Right cardiac atrium (tissue), 5 donors: ENCODE measurements at regions of chr2 and their contacts with region 1.

Region 1: GRCh38 chr2:209525834-209526281 is 102.0 kb downstream of the MAP2 start:
- DNase-seq: no peak
- ATAC-seq: peak; percentile 51
- H3K4me3 ChIP-seq: peak overlapping the region; percentile 1
- H3K27ac ChIP-seq: no peak overlapping the region
- H3K4me1 ChIP-seq: no peaks in the 10 kb centered on the region
- H3K27me3 ChIP-seq: no peaks in the 10 kb centered on the region

Region 2: DNA sequence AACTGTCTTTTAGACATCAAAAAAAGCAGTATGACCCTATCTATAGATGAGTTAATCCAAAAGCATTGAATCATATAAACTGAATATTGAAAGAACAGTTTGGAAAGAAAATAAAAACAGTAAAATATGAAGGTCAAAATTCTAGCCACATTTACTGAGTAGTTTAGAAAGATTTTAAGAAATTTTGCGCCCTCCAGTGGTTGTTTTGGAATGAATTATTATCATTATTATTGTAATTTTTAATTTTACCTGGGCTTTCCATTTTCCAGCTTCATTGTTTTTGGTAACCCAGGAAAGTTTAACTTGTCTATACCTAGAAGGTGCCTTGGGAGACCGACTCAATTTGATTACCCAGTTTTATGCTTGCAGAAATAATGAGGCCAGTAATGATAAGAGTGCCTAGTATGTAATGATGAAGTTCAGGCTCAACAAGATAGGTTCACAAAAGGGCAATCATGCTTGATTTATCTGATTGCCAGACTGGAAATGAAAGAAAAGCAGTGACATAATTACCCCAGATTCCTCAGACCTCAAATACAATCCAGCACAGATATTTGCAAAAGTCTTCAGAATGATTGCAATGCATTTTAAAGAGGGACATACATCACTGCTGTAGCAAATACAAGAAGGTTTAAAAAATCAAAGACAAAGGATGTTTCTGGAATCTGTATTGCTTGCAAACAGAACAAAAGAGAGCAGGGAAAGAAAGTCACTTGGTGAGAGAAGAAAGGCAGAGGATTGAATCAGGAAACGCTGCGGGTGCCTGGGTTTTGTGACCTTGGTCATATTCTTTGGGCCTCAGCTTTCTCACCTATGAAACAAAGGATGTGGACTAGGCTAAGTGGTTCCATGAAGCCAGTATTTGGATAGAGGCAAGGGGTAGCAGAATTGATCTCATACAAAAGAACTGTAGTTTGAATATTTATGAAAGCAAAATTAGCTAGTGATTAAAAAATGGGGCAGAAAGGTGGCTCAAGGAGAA is 51.8 kb after region 1 on chr2:
- intact Hi-C with region 1: loop called in 1 of 4 experiments (anchors 10 kb)
- DNase-seq: peak in 1 of 3 donors; percentile 18
- ATAC-seq: no peak
- H3K4me3 ChIP-seq: no peak overlapping the region
- H3K27ac ChIP-seq: no peak overlapping the region
- H3K4me1 ChIP-seq: no peaks in the 10 kb centered on the region
- H3K27me3 ChIP-seq: no peaks in the 10 kb centered on the region

Region 3: GRCh38 chr2:209638346-209638745 is 112.5 kb after region 1 on chr2:
- intact Hi-C with region 1: no loop called
- DNase-seq: no peak
- ATAC-seq: no peak
- H3K4me3 ChIP-seq: no peak overlapping the region
- H3K27ac ChIP-seq: no peak overlapping the region
- H3K4me1 ChIP-seq: no peaks in the 10 kb centered on the region
- H3K27me3 ChIP-seq: no peaks in the 10 kb centered on the region